ENCODE measurements at regions of chrX and their contacts with region 1.

Region 1: DNA sequence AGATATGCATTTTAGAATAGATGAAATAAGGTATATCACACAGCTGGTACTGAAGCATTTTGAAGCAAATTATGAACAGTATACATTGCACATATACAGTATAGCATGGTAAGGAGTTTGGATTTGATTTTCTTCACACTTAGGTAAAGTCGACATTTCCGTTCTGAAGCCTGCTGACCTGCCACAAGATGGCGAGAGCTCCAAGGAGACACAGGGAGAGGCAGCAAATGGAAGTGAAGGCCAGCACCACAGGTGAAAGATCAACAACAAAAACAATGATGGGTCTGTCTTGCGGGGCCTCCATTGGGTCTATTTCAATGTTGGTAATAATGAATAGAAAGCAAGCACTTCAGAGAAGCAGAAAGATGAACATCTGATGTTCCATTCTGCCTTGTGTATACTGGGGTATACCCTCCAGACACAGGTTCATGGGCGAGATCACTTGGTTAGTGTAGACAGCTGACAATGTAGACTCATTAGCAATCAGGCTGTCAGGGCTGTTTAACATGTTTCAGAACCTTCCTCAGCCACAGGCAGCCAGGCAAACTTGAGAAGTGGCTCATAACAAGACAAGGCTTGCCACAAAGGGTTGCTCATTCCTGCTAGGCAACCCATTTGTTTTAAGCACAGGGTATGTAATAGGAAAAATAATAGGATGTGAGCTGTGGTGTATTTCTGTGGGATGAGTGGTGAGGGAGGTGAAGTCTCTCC is 21.4 kb upstream of the NOX1 start:
- DNase-seq: no peak
- H3K4me3 ChIP-seq: no peak overlapping the region
- CTCF ChIP-seq: peak; percentile 56

Region 2: GRCh38 chrX:101287402-101287801 is 391.9 kb after region 1 on chrX:
- CTCF ChIA-PET with region 1: interaction called, 13 read pairs
- POLR2A ChIA-PET with region 1: no interaction called
- DNase-seq: no peak
- H3K4me3 ChIP-seq: no peak overlapping the region
- CTCF ChIP-seq: peak; percentile 37

Region 3: GRCh38 chrX:101395789-101396188 is 500.3 kb after region 1 on chrX:
- CTCF ChIA-PET with region 1: no interaction called
- POLR2A ChIA-PET with region 1: no interaction called
- DNase-seq: no peak
- H3K4me3 ChIP-seq: no peak overlapping the region
- CTCF ChIP-seq: no peak